Activated CD8-positive, alpha-beta T cell treated with anti-CD3 and anti-CD28 coated beads, Interleukin-2, amount 10 ng/mL, durations not matched to agents 7 days and 5 days (primary cell): ENCODE measurements at regions of chr5 and their contacts with region 1.

Region 1: DNA sequence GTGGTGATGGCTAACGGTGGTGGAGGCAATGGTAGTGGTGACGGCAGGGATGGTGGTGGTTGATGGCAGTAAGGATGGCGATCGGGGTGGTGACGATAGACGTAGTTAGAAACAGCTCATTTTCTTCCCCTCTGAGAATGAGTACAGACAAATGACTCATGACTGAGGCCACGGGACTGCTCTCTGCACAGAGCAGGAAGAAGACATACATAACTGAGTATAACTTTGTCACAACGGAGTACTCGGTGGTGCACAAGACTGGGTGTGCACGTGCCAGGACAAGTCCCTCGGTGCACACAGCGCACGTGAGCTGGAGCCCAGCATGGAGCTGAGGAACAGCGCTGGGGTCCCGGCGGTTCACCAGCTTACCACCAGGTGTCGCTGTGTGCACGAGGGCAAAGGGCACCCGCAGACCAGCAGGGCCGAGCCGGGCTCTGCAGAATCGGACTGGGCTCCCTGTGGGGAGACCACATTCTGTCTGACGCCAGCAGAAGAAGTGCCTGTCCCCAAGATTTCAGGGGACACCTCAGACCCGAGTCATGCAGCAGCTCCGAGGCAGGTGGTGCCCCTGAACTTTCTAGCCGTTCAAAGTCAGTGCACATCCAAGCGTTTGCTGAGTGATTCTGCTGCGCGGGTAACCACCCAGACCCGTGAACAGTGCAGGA is 188.6 kb downstream of the FSTL4 start:
- DNase-seq: peak; percentile 73
- ATAC-seq: peak; percentile 89
- H3K4me3 Mint-ChIP-seq: no peak overlapping the region
- H3K27ac Mint-ChIP-seq: no peak overlapping the region
- H3K4me1 Mint-ChIP-seq: peaks cover 9% of the 10 kb centered on the region
- H3K27me3 Mint-ChIP-seq: peaks cover 9% of the 10 kb centered on the region

Region 2: GRCh38 chr5:133382661-133383579 is 40.8 kb before region 1 on chr5:
- CTCF ChIA-PET with region 1: no interaction called
- POLR2A ChIA-PET with region 1: no interaction called
- DNase-seq: no peak
- ATAC-seq: no peak
- H3K4me3 Mint-ChIP-seq: no peak overlapping the region
- H3K27ac Mint-ChIP-seq: no peak overlapping the region
- H3K4me1 Mint-ChIP-seq: no peaks in the 10 kb centered on the region
- H3K27me3 Mint-ChIP-seq: peaks cover 24% of the 10 kb centered on the region

Region 3: GRCh38 chr5:133398646-133399101 is 25.1 kb before region 1 on chr5:
- CTCF ChIA-PET with region 1: interaction called, 34 read pairs
- POLR2A ChIA-PET with region 1: no interaction called
- DNase-seq: peak; percentile 45
- ATAC-seq: peak; percentile 77
- H3K4me3 Mint-ChIP-seq: no peak overlapping the region
- H3K27ac Mint-ChIP-seq: no peak overlapping the region
- H3K4me1 Mint-ChIP-seq: peaks cover 31% of the 10 kb centered on the region
- H3K27me3 Mint-ChIP-seq: no peaks in the 10 kb centered on the region

Region 4: DNA sequence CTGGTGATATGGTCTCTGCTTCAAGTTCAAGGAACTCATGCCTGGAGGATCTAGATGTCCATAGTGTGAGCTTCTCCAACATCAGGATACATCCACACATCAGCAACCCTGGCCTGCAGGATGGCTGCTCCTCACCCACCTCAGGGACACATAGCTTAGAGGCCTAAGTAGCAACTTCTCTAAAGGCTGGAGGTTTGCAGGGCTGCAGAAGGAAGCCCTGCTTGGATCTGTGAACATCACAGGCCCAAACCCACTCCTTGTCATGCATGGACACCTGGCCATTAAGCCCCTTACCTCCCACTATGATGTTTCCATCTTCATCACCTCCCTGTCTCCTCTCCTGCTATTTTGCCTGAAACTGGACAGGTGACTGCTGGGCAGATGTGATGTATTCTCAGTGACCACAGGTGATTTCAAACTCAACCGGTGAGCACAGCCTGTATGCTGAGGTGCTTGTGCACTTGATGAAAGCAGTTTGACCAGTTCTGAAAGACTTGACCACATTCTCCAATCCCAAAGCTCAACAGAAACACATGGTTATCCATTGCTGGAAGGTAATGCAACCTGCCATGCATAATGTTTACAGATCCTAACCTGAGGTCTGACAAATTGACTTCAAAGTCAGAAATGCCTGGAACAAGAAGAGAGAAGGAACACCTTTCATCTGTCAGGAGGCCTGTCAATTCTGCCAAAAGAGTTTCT is 16.6 kb before region 1 on chr5:
- CTCF ChIA-PET with region 1: interaction called, 11 read pairs
- POLR2A ChIA-PET with region 1: interaction called, 4 read pairs
- DNase-seq: no peak
- ATAC-seq: no peak
- H3K4me3 Mint-ChIP-seq: no peak overlapping the region
- H3K27ac Mint-ChIP-seq: no peak overlapping the region
- H3K4me1 Mint-ChIP-seq: peaks cover 4% of the 10 kb centered on the region
- H3K27me3 Mint-ChIP-seq: peaks cover 6% of the 10 kb centered on the region

Region 5: GRCh38 chr5:133456882-133457402 is 33.2 kb after region 1 on chr5:
- CTCF ChIA-PET with region 1: interaction called, 14 read pairs
- POLR2A ChIA-PET with region 1: no interaction called
- DNase-seq: no peak
- ATAC-seq: no peak
- H3K4me3 Mint-ChIP-seq: no peak overlapping the region
- H3K27ac Mint-ChIP-seq: no peak overlapping the region
- H3K4me1 Mint-ChIP-seq: no peaks in the 10 kb centered on the region
- H3K27me3 Mint-ChIP-seq: peaks cover 3% of the 10 kb centered on the region